AG04449 (cell line): ENCODE measurements at regions of chr2 and their contacts with region 1.

Region 1: DNA sequence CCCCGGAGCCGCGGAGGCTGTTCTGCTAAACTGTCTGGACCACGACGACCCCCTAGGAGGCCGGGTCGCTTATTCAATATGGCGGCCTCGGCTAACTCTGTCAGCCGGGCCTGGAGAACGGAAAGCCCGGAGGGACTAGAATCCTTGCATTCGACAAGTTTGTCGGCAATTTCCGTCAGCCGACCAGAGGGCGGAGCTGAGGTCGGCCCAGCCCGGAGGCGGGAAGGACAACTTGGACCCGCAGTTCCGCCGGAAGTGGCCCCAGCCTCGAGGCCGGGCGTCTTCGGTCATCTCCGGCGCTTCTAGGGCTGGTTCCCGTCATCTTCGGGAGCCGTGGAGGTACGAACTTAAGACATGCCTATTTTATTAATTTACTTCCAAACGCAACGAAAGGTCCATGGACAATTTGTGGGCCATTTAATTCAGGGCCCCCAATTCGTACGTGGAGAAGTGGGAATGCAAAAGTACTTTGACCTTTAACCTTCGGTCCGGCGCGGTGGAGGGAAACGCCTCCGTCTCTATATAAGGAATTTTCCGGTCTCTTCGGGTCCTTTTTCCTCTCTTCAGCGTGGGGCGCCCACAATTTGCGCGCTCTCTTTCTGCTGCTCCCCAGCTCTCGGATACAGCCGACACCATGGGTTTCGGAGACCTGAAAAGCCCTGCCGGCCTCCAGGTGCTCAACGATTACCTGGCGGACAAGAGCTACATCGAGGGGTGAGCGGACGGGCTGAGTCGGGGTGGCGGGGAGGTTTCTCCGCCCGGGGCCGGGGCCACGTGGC is at the starts of genes EEF1B2 and NDUFS1:
- DNase-seq: peak; percentile 91
- H3K4me3 ChIP-seq: peak within 1 kb of the TSS; percentile 92
- CTCF ChIP-seq: no peak

Region 2: GRCh38 chr2:206260188-206261012 is 100.9 kb after region 1 on chr2:
- CTCF ChIA-PET with region 1: interaction called, 15 read pairs
- POLR2A ChIA-PET with region 1: no interaction called
- DNase-seq: no peak
- H3K4me3 ChIP-seq: no peak overlapping the region
- CTCF ChIP-seq: peak; percentile 31

Region 3: GRCh38 chr2:206457188-206457634 is 297.7 kb after region 1 on chr2:
- CTCF ChIA-PET with region 1: no interaction called
- POLR2A ChIA-PET with region 1: no interaction called
- DNase-seq: no peak
- H3K4me3 ChIP-seq: no peak overlapping the region
- CTCF ChIP-seq: no peak